ENCODE measurements at regions of chr17 and their contacts with region 1.

Region 1: GRCh38 chr17:38674749-38675615 is at the start of gene EPOP:
- DNase-seq: peak; percentile 90 to 93
- ATAC-seq: peak; percentile 81 to 87
- H3K4me3 ChIP-seq: peak within 1 kb of the TSS; percentile 75
- H3K27ac ChIP-seq: peak within 1 kb of the TSS; percentile 80 to 92
- H3K4me1 ChIP-seq: peaks cover 41% of the 10 kb centered on the region
- CTCF ChIP-seq: no peak; the same call in 2 of the 3 replicates
- EP300 ChIP-seq: no peak
- POLR2A ChIP-seq: peak; percentile 80
- RAD21 ChIP-seq: no peak
- polyA plus RNA-seq, gene EPOP: 4.6 and 5.1 TPM in 2 replicates

Region 2: GRCh38 chr17:38498186-38498752 is 176.7 kb before region 1 on chr17:
- CTCF ChIA-PET with region 1: interaction called, 128 read pairs
- POLR2A ChIA-PET with region 1: no interaction called
- DNase-seq: no peak
- ATAC-seq: no peak
- H3K4me3 ChIP-seq: no peak overlapping the region
- H3K27ac ChIP-seq: no peak overlapping the region
- H3K4me1 ChIP-seq: no peaks in the 10 kb centered on the region
- CTCF ChIP-seq: no peak
- EP300 ChIP-seq: no peak
- POLR2A ChIP-seq: no peak
- RAD21 ChIP-seq: no peak

Region 3: DNA sequence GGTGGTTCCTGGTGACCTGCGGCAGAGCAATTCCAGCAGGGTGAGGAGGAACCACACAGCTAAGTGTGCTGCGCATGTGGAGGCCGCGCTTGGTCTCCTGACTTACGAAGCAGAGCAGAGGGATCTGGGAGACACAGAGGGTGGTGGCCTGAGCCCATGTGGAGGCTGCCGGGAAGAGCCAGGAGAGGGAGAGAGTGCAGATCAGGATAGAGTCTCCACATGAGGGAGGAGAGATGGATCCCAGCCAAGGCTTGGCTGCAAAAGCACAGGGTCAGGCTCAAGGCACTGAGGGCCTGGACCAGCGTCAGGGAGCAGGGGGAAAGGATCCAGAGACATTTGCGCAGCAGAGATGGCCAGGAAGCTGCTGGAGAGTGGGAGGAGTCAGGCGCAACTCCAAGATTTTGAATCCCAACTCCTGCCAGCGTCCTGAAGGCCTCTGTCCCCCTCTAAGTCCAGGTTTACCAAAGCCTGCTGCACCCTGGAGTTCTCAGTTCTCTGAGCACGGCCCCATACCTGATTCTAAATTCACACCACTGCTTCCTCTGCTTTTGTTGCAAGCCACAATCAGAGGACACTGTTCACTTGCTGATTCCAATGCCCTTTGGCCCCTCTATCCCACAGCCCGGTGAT is 18.8 kb after region 1 on chr17:
- CTCF ChIA-PET with region 1: interaction called, 41 read pairs
- POLR2A ChIA-PET with region 1: no interaction called
- DNase-seq: no peak
- ATAC-seq: peak; percentile 14 to 55; a peak in 3 of 6 replicates
- H3K4me3 ChIP-seq: no peak overlapping the region
- H3K27ac ChIP-seq: no peak overlapping the region
- H3K4me1 ChIP-seq: no peaks in the 10 kb centered on the region
- CTCF ChIP-seq: no peak
- EP300 ChIP-seq: no peak
- POLR2A ChIP-seq: no peak
- RAD21 ChIP-seq: no peak

Region 4: DNA sequence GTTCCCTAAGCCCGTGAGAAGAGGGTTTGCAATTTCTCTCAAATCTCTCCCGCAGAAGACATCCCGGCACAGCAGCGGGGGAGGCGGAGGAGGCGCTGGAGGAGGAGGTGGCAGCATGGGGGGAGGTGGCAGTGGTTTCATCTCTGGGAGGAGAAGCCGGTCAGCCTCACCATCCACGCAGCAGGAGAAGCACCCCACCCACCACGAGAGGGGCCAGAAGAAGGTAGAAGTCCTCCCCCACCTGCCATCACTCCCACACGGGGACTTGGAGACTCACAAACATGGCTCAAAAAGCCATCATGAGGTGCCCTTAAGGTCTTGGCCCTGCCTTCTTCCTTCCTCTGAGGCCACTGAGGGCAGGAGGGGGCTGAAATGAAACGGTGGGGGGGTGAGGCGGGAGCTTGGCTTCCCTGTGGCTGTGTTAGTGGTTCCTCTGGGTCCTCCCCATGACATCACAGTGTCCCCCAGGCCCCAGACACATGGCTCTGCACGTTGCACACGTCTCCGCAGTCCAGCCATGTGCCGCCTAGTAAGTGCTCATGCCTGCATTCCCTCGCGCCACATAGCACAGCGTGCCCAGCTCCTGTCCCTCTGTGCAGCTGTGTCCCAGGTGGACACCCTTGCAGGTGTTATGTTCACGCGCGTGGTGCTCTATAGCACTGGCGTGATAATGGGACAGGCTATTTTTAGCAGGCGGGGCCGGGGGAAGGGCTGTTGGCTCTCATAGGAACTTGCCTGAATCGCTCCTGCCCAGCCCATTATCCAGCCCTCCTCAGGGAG is 37.0 kb after region 1 on chr17:
- CTCF ChIA-PET with region 1: interaction called, 29 read pairs
- POLR2A ChIA-PET with region 1: no interaction called
- DNase-seq: no peak
- ATAC-seq: no peak
- H3K4me3 ChIP-seq: no peak overlapping the region
- H3K27ac ChIP-seq: no peak overlapping the region
- H3K4me1 ChIP-seq: peaks cover 8% of the 10 kb centered on the region; the same call in 2 of the 3 replicates
- CTCF ChIP-seq: no peak
- EP300 ChIP-seq: no peak
- POLR2A ChIP-seq: no peak
- RAD21 ChIP-seq: no peak

Region 5: GRCh38 chr17:38729886-38730525 is 55.0 kb after region 1 on chr17 and contains the start of gene CISD3:
- CTCF ChIA-PET with region 1: interaction called, 105 read pairs
- POLR2A ChIA-PET with region 1: interaction called, 7 read pairs
- DNase-seq: peak; percentile 86 to 88
- ATAC-seq: peak; percentile 77 to 79
- H3K4me3 ChIP-seq: peak within 1 kb of the TSS; percentile 77
- H3K27ac ChIP-seq: peak within 1 kb of the TSS; percentile 91 to 95
- H3K4me1 ChIP-seq: peaks cover 43% of the 10 kb centered on the region
- CTCF ChIP-seq: peak; percentile 98
- EP300 ChIP-seq: no peak
- POLR2A ChIP-seq: peak; percentile 59
- RAD21 ChIP-seq: peak; percentile 19 to 56; a peak in 4 of 5 replicates
- polyA plus RNA-seq, gene CISD3: 24.5 and 32.6 TPM in 2 replicates